ENCODE measurements at regions of chr11 and their contacts with region 1.

Region 1: DNA sequence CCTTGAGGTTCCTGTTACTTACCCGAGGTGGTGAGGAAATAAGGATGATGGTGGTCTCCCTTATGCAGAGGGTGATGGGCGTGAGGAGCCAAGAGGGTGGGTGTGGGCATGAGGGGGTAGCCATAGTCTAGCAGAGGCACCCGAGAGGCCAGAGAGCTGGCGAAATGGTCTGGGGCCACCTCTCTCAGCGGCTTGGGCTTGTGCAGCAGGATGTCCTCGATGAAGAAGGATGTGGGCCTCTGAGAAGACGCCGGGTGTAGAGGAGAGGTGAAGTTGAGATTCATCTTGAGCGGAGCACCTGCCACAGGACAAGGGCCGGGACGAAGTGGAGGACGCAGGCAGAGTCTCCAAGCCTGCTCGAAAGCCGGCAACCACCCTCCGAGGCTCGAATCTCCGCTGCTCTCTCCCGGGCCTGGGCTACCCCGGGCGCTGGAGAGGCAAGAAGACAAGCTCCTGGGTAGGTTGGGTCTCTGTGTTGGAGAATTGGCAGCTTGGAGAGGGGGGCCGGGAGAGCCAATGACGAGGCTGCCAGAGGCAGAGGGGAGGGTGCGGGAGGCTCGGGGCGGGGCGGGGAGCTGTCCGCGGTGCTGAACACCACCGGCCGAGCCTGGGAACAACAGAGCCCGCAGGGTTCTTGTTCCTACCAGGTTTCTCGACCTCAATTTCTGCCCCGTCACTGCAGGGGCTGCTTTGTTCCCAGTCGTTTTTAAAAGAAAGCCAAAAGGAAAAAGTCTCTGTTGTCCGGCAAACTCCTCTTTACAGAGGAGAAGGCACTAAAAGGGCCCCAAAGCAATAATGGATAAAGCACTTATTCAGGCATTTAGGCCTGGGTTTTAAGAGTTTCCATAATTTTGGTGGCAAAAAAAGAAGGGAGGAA is at the start of gene BSX:
- DNase-seq: peak; percentile 70
- H3K4me3 Mint-ChIP-seq: no peak within 1 kb of the TSS
- H3K27ac Mint-ChIP-seq: no peak within 1 kb of the TSS
- H3K4me1 Mint-ChIP-seq: peaks cover 36% of the 10 kb centered on the region
- H3K27me3 Mint-ChIP-seq: peaks cover 84% of the 10 kb centered on the region
- total RNA-seq, gene BSX: not detected

Region 2: DNA sequence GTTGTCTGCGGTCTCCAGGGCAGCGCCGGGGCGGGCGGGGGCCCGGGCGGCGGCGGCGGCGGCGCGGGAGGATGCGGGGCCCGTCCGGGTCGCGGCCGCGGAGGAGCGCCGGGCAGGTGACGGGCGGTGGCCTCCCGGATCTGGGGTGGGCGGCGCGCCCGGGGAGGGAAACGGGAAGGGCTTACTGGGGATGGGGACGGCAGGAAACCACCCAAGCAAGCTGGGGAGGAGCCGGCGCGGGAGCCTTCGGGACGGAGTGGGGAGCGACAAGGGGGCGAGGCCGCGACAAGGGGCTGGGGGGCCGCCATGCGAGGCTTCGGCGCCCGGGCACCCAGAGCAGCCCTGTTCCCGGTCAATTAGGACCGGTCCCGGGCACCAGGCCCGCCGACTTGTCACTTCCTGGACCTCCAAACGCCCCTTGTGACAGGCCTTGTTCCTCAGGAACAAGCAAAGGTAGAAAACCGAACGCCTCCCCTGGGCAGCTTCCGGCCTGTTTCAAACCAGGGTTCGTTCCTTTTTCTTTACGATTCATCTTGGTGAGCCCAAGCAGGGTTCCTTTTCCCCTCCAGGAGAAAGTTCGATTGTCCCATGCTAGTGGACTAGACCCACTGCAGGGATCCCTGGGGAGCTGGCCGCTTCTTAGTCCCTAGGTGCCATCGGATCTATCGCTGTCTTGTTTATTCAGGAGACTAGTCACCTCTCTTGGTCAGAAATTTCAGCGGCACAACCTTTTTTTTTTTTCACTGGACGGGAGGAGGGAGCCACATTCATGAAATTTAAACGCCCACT is 98.6 kb before region 1 on chr11:
- CTCF ChIA-PET with region 1: no interaction called
- POLR2A ChIA-PET with region 1: no interaction called
- intact Hi-C with region 1: loop called (anchors 5 kb)
- DNase-seq: peak; percentile 63
- H3K4me3 Mint-ChIP-seq: peak overlapping the region; percentile 78
- H3K27ac Mint-ChIP-seq: peak overlapping the region; percentile 64
- H3K4me1 Mint-ChIP-seq: peaks cover 25% of the 10 kb centered on the region
- H3K27me3 Mint-ChIP-seq: no peaks in the 10 kb centered on the region

Region 3: GRCh38 chr11:122933416-122933815 is 48.2 kb before region 1 on chr11:
- CTCF ChIA-PET with region 1: no interaction called
- POLR2A ChIA-PET with region 1: no interaction called
- intact Hi-C with region 1: no loop called
- DNase-seq: no peak
- H3K4me3 Mint-ChIP-seq: no peak overlapping the region
- H3K27ac Mint-ChIP-seq: no peak overlapping the region
- H3K4me1 Mint-ChIP-seq: no peaks in the 10 kb centered on the region
- H3K27me3 Mint-ChIP-seq: no peaks in the 10 kb centered on the region

Region 4: GRCh38 chr11:123152956-123153355 is 171.3 kb after region 1 on chr11:
- CTCF ChIA-PET with region 1: no interaction called
- POLR2A ChIA-PET with region 1: no interaction called
- intact Hi-C with region 1: no loop called
- DNase-seq: no peak
- H3K4me3 Mint-ChIP-seq: no peak overlapping the region
- H3K27ac Mint-ChIP-seq: no peak overlapping the region
- H3K4me1 Mint-ChIP-seq: no peaks in the 10 kb centered on the region
- H3K27me3 Mint-ChIP-seq: peaks cover 7% of the 10 kb centered on the region